Astrocyte of the cerebellum (primary cell): ENCODE measurements at regions of chr17 and their contacts with region 1.

Region 1: DNA sequence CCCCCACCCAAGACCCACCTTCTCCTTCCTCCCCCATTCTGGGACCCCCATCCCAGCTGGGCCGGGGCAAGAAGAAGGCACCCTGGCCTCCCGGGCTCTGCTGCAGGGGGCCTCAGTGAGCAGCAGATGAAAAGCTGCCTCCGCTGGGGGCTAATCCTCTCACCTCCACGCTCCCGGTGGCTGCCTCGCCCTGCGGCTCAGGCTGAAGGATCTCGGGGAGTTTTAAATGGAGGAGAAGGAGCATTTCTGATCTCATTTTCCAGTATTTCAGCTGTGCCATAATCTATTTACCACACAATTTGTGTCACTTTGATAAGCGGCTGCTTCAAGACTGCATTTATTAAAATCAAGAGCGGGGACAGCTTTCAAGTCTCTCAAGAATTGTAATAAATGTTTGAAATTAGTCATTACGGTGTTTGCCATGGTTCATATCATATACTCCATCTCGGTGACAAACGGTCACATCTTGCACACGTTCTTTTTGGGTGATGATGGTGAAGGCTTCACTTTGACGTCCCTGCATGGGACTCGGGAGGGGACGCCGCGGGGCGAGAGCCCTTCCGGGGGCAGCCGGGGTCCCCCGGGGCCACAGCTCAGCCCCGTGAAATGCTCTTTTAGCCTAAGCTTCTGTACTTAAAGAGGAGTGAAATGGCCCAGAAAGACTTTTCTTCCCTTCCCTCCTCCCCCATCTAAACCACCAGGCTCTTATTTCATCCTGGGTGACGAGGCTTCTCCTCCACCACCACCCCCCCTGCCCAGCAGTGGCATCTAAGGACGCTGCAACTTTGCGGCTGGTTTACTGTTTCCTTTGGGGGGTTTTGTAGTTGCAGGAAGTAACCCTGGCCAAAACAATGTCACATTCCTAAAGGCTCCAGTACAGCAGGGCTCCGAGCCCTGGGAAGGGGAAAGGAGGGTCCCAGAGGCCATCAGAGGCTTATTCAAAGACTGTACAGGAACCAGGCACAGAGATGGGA is 313.1 kb upstream of the TNRC6C start:
- DNase-seq: no peak
- H3K4me3 ChIP-seq: no peak overlapping the region
- CTCF ChIP-seq: no peak

Region 2: DNA sequence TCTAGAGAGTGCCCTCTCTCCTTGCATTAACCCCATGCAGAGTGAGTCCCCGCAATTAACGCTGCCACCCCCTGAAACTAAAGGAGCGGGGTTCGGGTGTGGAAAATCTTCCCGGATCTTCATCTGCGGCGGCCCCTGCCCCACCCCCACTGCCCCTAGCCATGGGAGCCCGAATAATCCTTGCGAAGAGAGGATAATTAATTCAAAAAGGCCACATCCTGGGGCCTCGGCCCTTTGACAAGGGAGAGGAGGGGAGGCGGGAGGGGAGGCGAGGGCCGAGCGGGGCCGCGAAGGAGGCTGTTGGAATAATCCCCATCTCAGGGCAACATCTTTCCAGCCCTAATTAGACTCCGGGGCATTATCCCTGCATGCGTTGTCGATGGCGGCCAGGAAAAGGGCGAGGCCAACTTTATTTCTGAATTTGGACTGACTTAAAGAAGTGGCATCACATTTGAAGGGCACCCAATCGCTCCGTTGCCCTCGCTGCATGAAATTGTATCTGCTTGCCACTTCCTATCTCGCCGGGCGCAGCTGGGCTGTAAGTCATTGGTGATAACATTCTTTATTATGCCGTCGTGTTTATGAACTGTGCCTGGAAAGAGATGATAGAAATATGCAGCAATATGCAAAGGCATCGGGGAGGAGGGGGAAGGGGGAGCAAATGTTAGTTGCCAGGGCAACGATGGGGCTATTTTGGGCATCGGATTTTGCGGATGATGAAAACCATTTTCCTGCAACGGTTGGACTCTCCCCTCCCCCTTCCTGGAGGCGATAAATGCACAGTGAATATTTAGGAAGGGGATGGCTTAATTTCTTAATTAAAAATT is 74.0 kb before region 1 on chr17:
- in situ Hi-C with region 1: no loop called
- DNase-seq: no peak
- H3K4me3 ChIP-seq: no peak overlapping the region
- CTCF ChIP-seq: no peak

Region 3: DNA sequence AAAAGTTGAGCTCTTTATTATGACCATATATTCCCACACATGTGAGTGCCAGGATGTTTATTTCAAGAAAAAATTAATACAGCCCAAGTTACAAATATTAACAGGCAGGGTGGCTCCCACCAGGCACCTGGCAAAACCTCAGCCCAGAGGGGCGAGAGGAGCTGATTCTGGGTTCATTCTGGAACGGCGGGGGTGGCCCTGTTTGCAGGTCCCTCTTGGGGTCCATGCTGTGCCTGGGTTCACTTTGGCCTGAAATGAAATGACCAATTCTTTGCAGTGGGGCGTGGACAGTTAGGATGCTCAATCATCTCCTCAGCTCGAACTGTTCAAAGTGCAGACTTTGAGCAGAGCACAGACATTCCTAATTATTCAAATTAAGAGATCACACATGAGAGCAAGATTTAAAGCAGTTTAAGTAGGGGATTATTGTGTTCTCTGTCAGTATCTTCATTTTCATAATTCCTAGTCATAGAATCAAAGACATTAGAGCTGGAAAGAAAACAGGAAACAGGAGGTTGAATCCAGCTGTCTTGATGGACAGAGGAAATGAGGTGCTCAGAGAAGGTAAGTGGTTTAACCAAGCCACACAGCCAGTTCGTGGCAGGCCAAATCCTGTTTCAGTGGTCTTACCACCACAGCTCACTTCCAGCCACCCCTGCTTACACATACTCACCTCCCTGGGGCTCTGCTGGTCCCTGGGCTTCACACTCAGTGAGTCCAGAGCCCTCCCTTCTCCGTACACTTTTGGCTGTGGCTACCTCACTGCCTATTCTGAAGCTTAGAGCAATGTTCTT is 50.7 kb before region 1 on chr17:
- in situ Hi-C with region 1: loop called (anchors 5 kb)
- DNase-seq: no peak
- H3K4me3 ChIP-seq: no peak overlapping the region
- CTCF ChIP-seq: no peak

Region 4: GRCh38 chr17:77717941-77718668 is 72.7 kb after region 1 on chr17:
- in situ Hi-C with region 1: loop called (anchors 5 kb)
- DNase-seq: no peak
- H3K4me3 ChIP-seq: no peak overlapping the region
- CTCF ChIP-seq: no peak

Region 5: GRCh38 chr17:77734341-77735080 is 89.2 kb after region 1 on chr17:
- in situ Hi-C with region 1: no loop called
- DNase-seq: no peak
- H3K4me3 ChIP-seq: no peak overlapping the region
- CTCF ChIP-seq: no peak